ENCODE measurements at regions of chr13 and their contacts with region 1.

Region 1: GRCh38 chr13:65214484-65214883 is 2015.7 kb downstream of the PCDH9 start:
- DNase-seq: no peak

Region 2: DNA sequence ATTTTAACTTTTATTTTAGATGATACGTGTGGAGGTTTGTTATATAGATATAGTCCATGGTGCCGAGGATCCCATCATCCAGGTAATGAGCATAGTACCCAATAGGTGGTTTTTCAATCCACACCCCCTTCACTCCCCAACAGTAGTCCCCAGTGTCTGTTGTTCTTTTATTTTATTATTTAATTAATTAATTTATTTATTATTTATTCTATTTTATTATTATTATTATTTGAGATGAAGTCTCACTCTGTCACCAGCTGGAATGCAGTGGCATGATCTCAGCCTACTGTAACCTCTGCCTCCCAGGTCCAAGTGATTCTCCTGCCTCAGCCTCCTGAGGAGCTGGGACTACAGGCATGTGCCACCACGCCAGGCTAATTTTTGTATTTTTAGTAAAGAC is 70.6 kb before region 1 on chr13:
- intact Hi-C with region 1: no loop called
- DNase-seq: no peak

Region 3: GRCh38 chr13:65342541-65343337 is 128.3 kb after region 1 on chr13:
- intact Hi-C with region 1: no loop called
- DNase-seq: no peak

Region 4: GRCh38 chr13:65505941-65506340 is 291.5 kb after region 1 on chr13:
- intact Hi-C with region 1: no loop called
- DNase-seq: no peak

Region 5: GRCh38 chr13:66312312-66313087 is 1098.0 kb after region 1 on chr13:
- intact Hi-C with region 1: no loop called
- DNase-seq: no peak

Region 6: DNA sequence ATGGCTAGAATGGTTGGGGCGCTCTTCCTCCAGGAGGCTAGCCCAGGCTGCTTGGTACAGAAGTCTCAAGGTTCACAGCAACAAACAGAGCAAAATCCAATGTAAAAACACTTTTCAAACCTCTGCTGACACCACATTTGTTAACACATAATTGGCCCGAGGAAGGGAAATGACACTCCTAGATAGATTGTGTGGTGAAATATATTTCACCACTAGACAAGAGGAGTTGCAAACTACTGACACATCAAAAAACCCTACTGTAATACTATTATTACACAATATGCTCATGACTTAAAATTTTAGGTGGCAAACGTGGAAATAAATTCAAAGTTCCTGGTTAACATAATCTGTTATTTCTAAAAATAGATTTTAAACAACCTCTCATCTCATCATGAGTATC is 1372.0 kb after region 1 on chr13:
- intact Hi-C with region 1: loop called in 1 of 2 experiments (anchors 5 kb)
- DNase-seq: no peak